Caco-2 (cell line): ENCODE measurements at regions of chr3 and their contacts with region 1.

Region 1: GRCh38 chr3:83769791-83770646 is 1188.8 kb upstream of the CADM2 start:
- DNase-seq: no peak
- H3K4me3 ChIP-seq: no peak overlapping the region
- H3K4me3 Mint-ChIP-seq: no peak overlapping the region
- H3K27ac Mint-ChIP-seq: no peak overlapping the region
- H3K4me1 ChIP-seq: no peaks in the 10 kb centered on the region
- H3K4me1 Mint-ChIP-seq: no peaks in the 10 kb centered on the region
- H3K27me3 ChIP-seq: no peaks in the 10 kb centered on the region
- H3K27me3 Mint-ChIP-seq: no peaks in the 10 kb centered on the region
- CTCF ChIP-seq: no peak

Region 2: GRCh38 chr3:83625261-83625660 is 144.8 kb before region 1 on chr3:
- CTCF ChIA-PET with region 1: no interaction called
- POLR2A ChIA-PET with region 1: no interaction called
- intact Hi-C with region 1: no loop called
- DNase-seq: no peak
- H3K4me3 ChIP-seq: no peak overlapping the region
- H3K4me3 Mint-ChIP-seq: no peak overlapping the region
- H3K27ac Mint-ChIP-seq: no peak overlapping the region
- H3K4me1 ChIP-seq: no peaks in the 10 kb centered on the region
- H3K4me1 Mint-ChIP-seq: no peaks in the 10 kb centered on the region
- H3K27me3 ChIP-seq: no peaks in the 10 kb centered on the region
- H3K27me3 Mint-ChIP-seq: no peaks in the 10 kb centered on the region
- CTCF ChIP-seq: no peak

Region 3: DNA sequence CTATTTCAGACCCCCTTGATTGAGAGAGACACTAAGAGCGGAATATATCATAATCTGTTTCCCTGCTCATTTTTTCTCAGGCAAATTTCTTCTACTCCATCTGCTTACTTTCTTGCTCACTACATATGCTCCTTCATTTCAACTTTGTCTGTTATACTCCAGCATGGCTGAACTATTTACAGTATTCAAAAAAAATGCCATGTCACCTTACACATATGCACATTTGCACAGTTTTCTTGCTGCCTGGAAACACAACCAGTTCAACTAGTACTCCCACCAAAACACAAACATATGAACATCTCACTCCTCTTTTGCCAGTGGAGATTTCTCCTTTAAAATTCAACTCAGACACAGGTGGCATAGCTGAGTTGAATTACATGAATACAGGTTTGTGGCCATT is 46.6 kb after region 1 on chr3:
- CTCF ChIA-PET with region 1: no interaction called
- POLR2A ChIA-PET with region 1: no interaction called
- intact Hi-C with region 1: loop called (anchors 5 kb)
- DNase-seq: no peak
- H3K4me3 ChIP-seq: no peak overlapping the region
- H3K4me3 Mint-ChIP-seq: no peak overlapping the region
- H3K27ac Mint-ChIP-seq: no peak overlapping the region
- H3K4me1 ChIP-seq: no peaks in the 10 kb centered on the region
- H3K4me1 Mint-ChIP-seq: no peaks in the 10 kb centered on the region
- H3K27me3 ChIP-seq: no peaks in the 10 kb centered on the region
- H3K27me3 Mint-ChIP-seq: no peaks in the 10 kb centered on the region
- CTCF ChIP-seq: no peak